PC-9 (cell line): ENCODE measurements at regions of chr1 and their contacts with region 1.

Region 1: DNA sequence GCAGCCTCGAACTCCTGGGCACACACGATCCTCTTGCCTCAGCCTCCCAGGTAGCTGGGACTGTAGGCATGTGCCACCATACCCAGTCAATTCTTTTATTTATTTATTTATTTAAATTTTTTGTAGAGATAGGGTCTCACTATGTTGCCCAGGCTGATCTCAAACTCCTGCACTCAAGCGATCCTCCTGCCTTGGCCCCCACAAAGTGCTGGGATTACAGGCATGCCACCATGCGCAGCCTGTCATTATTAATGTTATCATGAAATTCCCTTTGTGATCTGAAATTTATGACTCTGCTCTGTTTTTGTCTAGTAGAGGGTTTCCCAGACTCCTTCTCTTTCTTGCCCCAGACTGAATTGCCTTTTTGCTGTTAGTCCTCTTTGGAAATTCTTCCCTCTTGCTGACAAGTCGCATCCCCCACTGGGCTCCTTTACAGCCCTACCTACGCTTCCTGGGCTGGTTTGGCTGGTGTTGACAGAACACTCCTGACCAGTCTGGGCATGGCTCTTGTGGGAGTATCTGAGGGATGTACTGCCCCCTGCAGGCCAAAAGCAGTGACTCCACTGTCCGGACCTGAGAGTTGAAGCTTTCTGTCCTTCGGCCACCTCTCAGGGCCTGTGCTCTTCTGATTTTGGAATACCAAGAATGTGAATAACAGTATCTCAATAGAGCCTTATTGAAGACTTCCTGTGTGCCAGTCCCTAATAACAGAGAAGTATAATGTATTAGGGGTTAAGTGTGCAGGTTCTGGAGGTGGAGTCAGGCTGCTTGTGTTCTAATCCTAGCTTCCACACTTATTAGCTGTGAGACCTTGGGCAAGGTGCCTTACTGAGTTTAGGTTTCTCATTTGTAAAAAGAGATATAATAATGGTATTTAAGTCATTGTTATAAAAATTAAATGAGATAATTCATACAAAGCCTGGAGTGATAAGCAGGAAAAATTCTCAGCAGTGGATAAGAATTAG is 28.2 kb downstream of the TCEANC2 start:
- DNase-seq: peak; percentile 44 to 60
- H3K4me3 ChIP-seq: no peak overlapping the region
- H3K27ac ChIP-seq: no peak overlapping the region
- H3K4me1 ChIP-seq: no peaks in the 10 kb centered on the region
- H3K27me3 ChIP-seq: no peaks in the 10 kb centered on the region
- CTCF ChIP-seq: peak; percentile 82

Region 2: GRCh38 chr1:53860967-53861411 is 220.6 kb before region 1 on chr1:
- CTCF ChIA-PET with region 1: no interaction called
- POLR2A ChIA-PET with region 1: no interaction called
- intact Hi-C with region 1: loop called (anchors 5 kb)
- DNase-seq: peak; percentile 47 to 50
- H3K4me3 ChIP-seq: no peak overlapping the region
- H3K27ac ChIP-seq: no peak overlapping the region
- H3K4me1 ChIP-seq: no peaks in the 10 kb centered on the region
- H3K27me3 ChIP-seq: no peaks in the 10 kb centered on the region
- CTCF ChIP-seq: peak; percentile 80

Region 3: GRCh38 chr1:53979712-53980450 is 101.7 kb before region 1 on chr1:
- CTCF ChIA-PET with region 1: no interaction called
- POLR2A ChIA-PET with region 1: no interaction called
- intact Hi-C with region 1: no loop called
- DNase-seq: no peak
- H3K4me3 ChIP-seq: no peak overlapping the region
- H3K27ac ChIP-seq: no peak overlapping the region
- H3K4me1 ChIP-seq: no peaks in the 10 kb centered on the region
- H3K27me3 ChIP-seq: no peaks in the 10 kb centered on the region
- CTCF ChIP-seq: no peak

Region 4: GRCh38 chr1:54064299-54064698 is 17.3 kb before region 1 on chr1:
- CTCF ChIA-PET with region 1: interaction called, 15 read pairs
- POLR2A ChIA-PET with region 1: no interaction called
- intact Hi-C with region 1: no loop called
- DNase-seq: no peak
- H3K4me3 ChIP-seq: no peak overlapping the region
- H3K27ac ChIP-seq: no peak overlapping the region
- H3K4me1 ChIP-seq: no peaks in the 10 kb centered on the region
- H3K27me3 ChIP-seq: no peaks in the 10 kb centered on the region
- CTCF ChIP-seq: no peak

Region 5: GRCh38 chr1:54199765-54200518 is 118.4 kb after region 1 on chr1 and contains the starts of genes CYB5RL and MRPL37:
- CTCF ChIA-PET with region 1: no interaction called
- POLR2A ChIA-PET with region 1: no interaction called
- intact Hi-C with region 1: no loop called
- DNase-seq: peak; percentile 93 to 94
- H3K4me3 ChIP-seq: peak within 1 kb of the TSS; percentile 98
- H3K27ac ChIP-seq: no peak within 1 kb of the TSS
- H3K4me1 ChIP-seq: peaks cover 18% of the 10 kb centered on the region
- H3K27me3 ChIP-seq: no peaks in the 10 kb centered on the region
- CTCF ChIP-seq: no peak
- total RNA-seq, gene CYB5RL: 6.5 and 6.7 TPM in 2 replicates
- total RNA-seq, gene MRPL37: 180 and 198 TPM in 2 replicates

Region 6: GRCh38 chr1:54246116-54246721 is 164.6 kb after region 1 on chr1:
- CTCF ChIA-PET with region 1: no interaction called
- POLR2A ChIA-PET with region 1: interaction called, 10 read pairs
- intact Hi-C with region 1: no loop called
- DNase-seq: no peak
- H3K4me3 ChIP-seq: no peak overlapping the region
- H3K27ac ChIP-seq: no peak overlapping the region
- H3K4me1 ChIP-seq: peaks cover 14% of the 10 kb centered on the region
- H3K27me3 ChIP-seq: no peaks in the 10 kb centered on the region
- CTCF ChIP-seq: no peak

Region 7: GRCh38 chr1:54528613-54529012 is 447.0 kb after region 1 on chr1:
- CTCF ChIA-PET with region 1: no interaction called
- POLR2A ChIA-PET with region 1: no interaction called
- intact Hi-C with region 1: no loop called
- DNase-seq: no peak
- H3K4me3 ChIP-seq: no peak overlapping the region
- H3K27ac ChIP-seq: no peak overlapping the region
- H3K4me1 ChIP-seq: no peaks in the 10 kb centered on the region
- H3K27me3 ChIP-seq: no peaks in the 10 kb centered on the region
- CTCF ChIP-seq: no peak